Posterior vena cava (tissue), 2 donors: ENCODE measurements at regions of chr20 and their contacts with region 1.

Region 1: DNA sequence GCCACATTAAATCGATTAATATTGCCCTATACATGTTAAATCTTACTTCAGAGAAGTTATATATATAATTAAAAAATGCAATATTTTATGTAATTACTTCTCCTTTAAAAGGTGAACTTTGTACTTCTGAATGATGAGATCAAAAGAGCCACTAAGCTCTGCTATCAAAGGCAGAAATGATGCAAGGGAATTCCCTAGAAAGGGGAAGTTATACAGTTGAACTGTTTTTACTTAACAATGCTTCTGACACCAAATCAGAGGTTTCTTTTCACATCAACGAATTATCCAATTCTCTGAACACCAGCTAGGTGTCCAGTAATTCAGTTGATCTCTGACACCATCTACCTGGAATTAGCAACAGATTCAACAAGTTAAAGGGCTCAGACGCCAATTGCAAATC is 319.9 kb upstream of the TSHZ2 start:
- DNase-seq: no peak

Region 2: GRCh38 chr20:52665441-52665840 is 13.2 kb after region 1 on chr20:
- intact Hi-C with region 1: loop called in 1 of 2 experiments (anchors 1 kb)
- DNase-seq: no peak

Region 3: DNA sequence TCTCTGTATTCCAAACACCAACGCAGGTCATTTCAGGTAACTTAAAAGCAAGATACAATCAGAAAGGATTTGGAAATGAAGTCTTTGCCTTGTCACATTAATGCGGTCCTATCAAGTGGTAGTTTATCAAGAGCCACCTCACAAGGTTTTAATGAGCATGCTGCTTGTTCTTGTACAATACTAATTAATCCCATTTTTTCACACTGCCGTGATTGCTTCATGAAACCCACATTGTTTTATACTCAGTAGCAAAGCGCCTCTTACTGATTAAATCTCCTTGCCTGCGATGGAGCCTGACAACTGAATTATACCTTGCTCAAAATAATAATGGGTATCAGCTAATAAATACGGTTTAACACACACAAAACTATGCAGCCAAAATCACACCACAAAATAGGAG is 85.8 kb after region 1 on chr20:
- intact Hi-C with region 1: no loop called
- DNase-seq: no peak

Region 4: GRCh38 chr20:52859156-52859876 is 207.0 kb after region 1 on chr20:
- intact Hi-C with region 1: no loop called
- DNase-seq: no peak